Panc1 (cell line): ENCODE measurements at regions of chr18 and their contacts with region 1.

Region 1: DNA sequence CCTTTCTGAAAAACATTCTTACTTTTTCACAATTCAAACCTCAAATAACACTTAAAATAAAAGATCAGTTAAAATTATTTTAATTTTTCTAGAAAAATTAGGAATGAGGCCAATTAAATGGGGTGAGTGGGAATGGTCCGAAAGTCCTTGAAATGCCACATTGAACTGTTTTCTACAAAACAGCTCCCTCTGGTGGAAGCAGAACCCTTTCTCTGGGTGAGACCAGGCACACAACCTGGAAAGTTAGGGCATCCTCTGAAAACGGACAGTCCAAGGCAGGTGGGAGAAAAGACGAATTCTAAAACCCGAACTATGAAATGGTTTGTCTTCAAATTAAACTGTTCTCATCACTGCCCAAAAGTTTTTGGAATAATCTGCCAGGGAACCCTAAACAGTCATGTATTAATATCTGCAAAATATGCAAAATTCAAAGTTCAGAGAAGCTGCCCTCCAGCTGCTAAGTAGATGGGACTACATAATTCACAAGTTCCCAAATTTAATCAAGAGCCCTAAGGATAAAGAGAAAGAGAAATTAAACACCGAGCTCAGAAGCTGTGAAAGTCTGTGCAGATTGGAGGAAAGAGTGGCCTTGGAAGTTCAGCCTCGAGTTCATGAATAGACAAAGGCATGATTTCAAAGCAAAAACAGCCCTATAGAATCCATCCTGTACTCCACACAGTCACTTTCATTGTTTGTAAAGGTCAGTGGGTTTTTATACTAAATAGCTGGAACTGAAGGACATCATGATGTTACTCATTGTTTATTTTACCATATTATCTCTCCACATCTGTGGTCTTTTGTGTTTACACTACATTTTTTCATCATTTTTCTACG is 108.3 kb downstream of the PIEZO2 start:
- DNase-seq: peak; percentile 17
- ATAC-seq: no peak
- H3K4me3 ChIP-seq: no peak overlapping the region
- H3K27ac ChIP-seq: no peak overlapping the region
- H3K4me1 ChIP-seq: no peaks in the 10 kb centered on the region
- H3K27me3 ChIP-seq: no peaks in the 10 kb centered on the region
- CTCF ChIP-seq: peak; percentile 76

Region 2: GRCh38 chr18:10851824-10852319 is 189.2 kb before region 1 on chr18:
- CTCF ChIA-PET with region 1: no interaction called
- POLR2A ChIA-PET with region 1: no interaction called
- in situ Hi-C with region 1: no loop called
- intact Hi-C with region 1: loop called (anchors 1 kb)
- DNase-seq: peak; percentile 12
- ATAC-seq: no peak
- H3K4me3 ChIP-seq: no peak overlapping the region
- H3K27ac ChIP-seq: no peak overlapping the region
- H3K4me1 ChIP-seq: no peaks in the 10 kb centered on the region
- H3K27me3 ChIP-seq: no peaks in the 10 kb centered on the region; the same call in 1 of the 2 replicates
- CTCF ChIP-seq: peak; percentile 73; the same call in 1 of the 2 replicates

Region 3: GRCh38 chr18:11268741-11269233 is 227.7 kb after region 1 on chr18:
- CTCF ChIA-PET with region 1: no interaction called
- POLR2A ChIA-PET with region 1: no interaction called
- in situ Hi-C with region 1: no loop called
- intact Hi-C with region 1: no loop called
- DNase-seq: no peak
- ATAC-seq: no peak
- H3K4me3 ChIP-seq: no peak overlapping the region
- H3K27ac ChIP-seq: no peak overlapping the region
- H3K4me1 ChIP-seq: no peaks in the 10 kb centered on the region
- H3K27me3 ChIP-seq: no peaks in the 10 kb centered on the region
- CTCF ChIP-seq: no peak